Heart left ventricle (tissue), 16 donors: ENCODE measurements at regions of chrX and their contacts with region 1.

Region 1: GRCh38 chrX:68822641-68823410 is 6.0 kb upstream of the EFNB1 start:
- DNase-seq: peak in 4 of 5 donors; percentile 40 to 62 (median 54)
- ATAC-seq: peak; percentile 49 to 90 (median 86)
- H3K4me3 ChIP-seq: no peak overlapping the region
- H3K27ac ChIP-seq: no peak overlapping the region
- H3K4me1 ChIP-seq: peaks cover 0 to 5% (median 0%) of the 10 kb centered on the region in 12 donors
- H3K27me3 ChIP-seq: peaks cover 0 to 25% (median 0%) of the 10 kb centered on the region in 9 donors
- CTCF ChIP-seq: peak; percentile 34 to 70 (median 64)
- POLR2A ChIP-seq: no peak

Region 2: DNA sequence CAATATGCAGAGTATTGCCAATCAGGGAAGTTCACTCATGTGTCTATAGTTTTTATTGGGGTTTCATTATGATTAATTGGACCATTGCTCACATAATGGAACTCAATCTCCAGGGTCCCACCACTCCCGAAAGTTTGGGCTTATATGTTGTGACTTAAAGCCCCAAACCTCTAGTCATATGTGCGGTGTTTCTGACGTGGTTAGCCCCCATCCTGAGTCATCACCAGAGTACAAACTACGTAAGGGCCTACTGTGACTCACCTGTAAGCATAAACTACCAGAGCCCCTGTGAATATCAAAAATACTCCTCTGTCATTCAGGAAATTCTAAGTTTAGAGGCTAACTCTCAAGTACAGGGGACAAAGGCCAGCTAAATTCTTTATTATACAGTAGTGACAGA is 318.6 kb before region 1 on chrX:
- intact Hi-C with region 1: loop called in 1 of 10 experiments (anchors 10 kb)
- DNase-seq: no peak
- ATAC-seq: no peak
- H3K4me3 ChIP-seq: no peak overlapping the region
- H3K27ac ChIP-seq: no peak overlapping the region
- H3K4me1 ChIP-seq: peaks cover 0 to 49% (median 12%) of the 10 kb centered on the region in 12 donors
- H3K27me3 ChIP-seq: no peaks in the 10 kb centered on the region
- CTCF ChIP-seq: no peak
- POLR2A ChIP-seq: no peak

Region 3: GRCh38 chrX:68922042-68922441 is 99.2 kb after region 1 on chrX:
- intact Hi-C with region 1: no loop called
- DNase-seq: peak in 1 of 5 donors; percentile 32
- ATAC-seq: peak; percentile 10 to 69 (median 46)
- H3K4me3 ChIP-seq: no peak overlapping the region
- H3K27ac ChIP-seq: no peak overlapping the region
- H3K4me1 ChIP-seq: peaks cover 0 to 4% (median 0%) of the 10 kb centered on the region in 12 donors
- H3K27me3 ChIP-seq: no peaks in the 10 kb centered on the region
- CTCF ChIP-seq: peak in 1 of 12 donors; percentile 13
- POLR2A ChIP-seq: no peak

Region 4: DNA sequence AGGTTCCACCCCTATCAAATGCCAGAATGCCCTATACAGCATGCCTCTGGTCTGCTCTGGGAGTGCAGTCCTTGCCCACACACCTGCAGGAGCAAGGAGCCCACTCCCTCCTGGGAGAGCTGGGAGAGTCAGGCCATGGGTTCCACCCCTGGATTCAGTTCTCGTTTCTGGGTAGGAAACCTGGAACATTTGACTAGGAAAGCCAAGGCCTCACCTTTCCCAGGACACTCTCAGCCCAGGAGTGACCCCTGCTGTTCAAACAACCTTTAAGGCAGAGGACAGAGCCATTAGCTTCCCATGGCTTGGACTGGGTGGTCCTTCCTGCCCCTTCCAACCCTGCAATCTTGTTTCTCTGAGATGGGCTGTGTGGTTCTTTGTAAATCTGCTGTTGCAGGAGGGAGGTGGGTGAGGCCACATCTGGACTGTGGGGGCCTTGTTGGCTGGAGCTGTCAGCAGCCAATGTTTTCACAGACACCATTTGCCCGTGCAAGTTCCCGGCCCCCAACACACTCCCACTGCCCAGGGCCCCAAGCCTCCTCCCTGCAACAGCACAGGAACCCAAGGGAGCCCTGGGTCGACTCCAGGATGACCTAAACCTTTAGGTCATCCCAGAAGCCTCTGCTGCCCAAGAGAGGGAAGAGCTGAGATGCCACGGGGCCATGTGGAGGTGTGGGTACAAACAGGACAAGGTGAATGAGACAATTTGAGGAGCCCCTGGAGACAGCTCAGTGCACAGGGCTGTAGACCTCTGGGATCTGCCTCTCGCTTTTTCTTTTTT is 238.0 kb after region 1 on chrX:
- intact Hi-C with region 1: loop called (anchors 1 to 5 kb)
- DNase-seq: peak in 4 of 5 donors; percentile 38 to 54 (median 43)
- ATAC-seq: peak; percentile 61 to 91 (median 80)
- H3K4me3 ChIP-seq: no peak overlapping the region
- H3K27ac ChIP-seq: no peak overlapping the region
- H3K4me1 ChIP-seq: peaks cover 0 to 6% (median 0%) of the 10 kb centered on the region in 12 donors
- H3K27me3 ChIP-seq: peaks cover 0 to 18% (median 0%) of the 10 kb centered on the region in 9 donors
- CTCF ChIP-seq: peak; percentile 14 to 63 (median 49)
- POLR2A ChIP-seq: no peak